Ascending aorta (tissue), 2 donors: ENCODE measurements at regions of chr11 and their contacts with region 1.

Region 1: GRCh38 chr11:65888163-65888814 is at the start of gene FIBP:
- DNase-seq: peak; percentile 90 to 99
- H3K4me3 ChIP-seq: peak within 1 kb of the TSS; percentile 82 to 85
- H3K27ac ChIP-seq: peak within 1 kb of the TSS; percentile 98
- H3K4me1 ChIP-seq: peaks cover 20 to 28% of the 10 kb centered on the region in 2 donors
- H3K27me3 ChIP-seq: no peaks in the 10 kb centered on the region
- CTCF ChIP-seq: peak; percentile 84 to 98 (median 96)
- total RNA-seq, gene FIBP: 57.2 TPM

Region 2: DNA sequence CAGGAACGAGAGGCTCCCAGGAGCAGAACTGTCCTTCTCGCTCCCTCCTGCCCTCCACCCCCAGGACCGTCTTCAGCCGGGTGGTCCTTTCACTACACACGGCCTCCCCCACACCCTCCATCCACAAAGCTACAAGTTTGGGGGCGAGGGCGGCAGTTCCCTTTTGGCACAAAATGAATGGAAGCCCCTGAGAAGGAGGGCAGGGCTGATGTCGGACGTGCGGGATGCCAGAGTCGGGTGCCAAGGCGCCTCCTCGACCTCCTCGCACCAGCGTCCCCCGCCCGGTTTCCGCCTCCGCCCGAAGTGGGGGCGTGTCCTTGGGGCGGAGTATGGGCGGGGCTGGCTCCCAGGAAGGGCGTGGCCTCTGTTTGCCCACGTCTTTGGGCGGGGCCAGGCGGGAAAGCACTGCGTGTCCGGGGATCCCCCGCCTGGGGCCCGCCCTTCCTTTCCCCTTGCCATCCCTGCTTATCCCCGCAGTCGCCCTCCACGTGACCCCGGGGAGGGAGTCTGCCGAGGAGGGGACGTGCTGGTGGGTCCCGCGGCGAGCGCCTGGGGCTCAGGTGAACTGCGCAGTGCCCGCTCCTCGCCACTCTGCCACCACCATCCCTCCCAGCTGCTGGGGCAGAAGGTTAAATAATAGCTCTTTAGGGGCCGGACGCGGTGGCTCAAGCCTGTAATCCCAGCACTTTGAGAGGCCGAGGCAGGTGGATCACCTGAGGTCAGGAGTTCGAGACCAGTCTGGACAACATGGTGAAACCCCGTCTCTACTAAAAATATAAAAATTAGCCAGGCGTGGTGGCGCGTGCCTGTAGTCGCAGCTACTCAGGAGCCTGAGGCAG is 14.8 kb before region 1 on chr11:
- intact Hi-C with region 1: loop called (anchors 1 kb)
- DNase-seq: peak; percentile 84 to 97
- H3K4me3 ChIP-seq: peak overlapping the region; percentile 67 to 92
- H3K27ac ChIP-seq: peak overlapping the region; percentile 92 to 99
- H3K4me1 ChIP-seq: peaks cover 3 to 17% of the 10 kb centered on the region in 2 donors
- H3K27me3 ChIP-seq: no peaks in the 10 kb centered on the region
- CTCF ChIP-seq: no peak

Region 3: GRCh38 chr11:65900125-65900898 is 12.0 kb after region 1 on chr11 and contains the start of gene FOSL1:
- intact Hi-C with region 1: loop called (anchors 1 kb)
- DNase-seq: peak; percentile 80 to 96
- H3K4me3 ChIP-seq: peak within 1 kb of the TSS; percentile 70 to 80
- H3K27ac ChIP-seq: peak within 1 kb of the TSS; percentile 84 to 85
- H3K4me1 ChIP-seq: peaks cover 7 to 20% of the 10 kb centered on the region in 2 donors
- H3K27me3 ChIP-seq: no peaks in the 10 kb centered on the region
- CTCF ChIP-seq: no peak
- total RNA-seq, gene FOSL1: 123 TPM

Region 4: GRCh38 chr11:65961232-65961901 is 73.1 kb after region 1 on chr11 and contains the start of gene SART1:
- intact Hi-C with region 1: loop called (anchors 1 kb)
- DNase-seq: peak; percentile 86 to 99
- H3K4me3 ChIP-seq: peak within 1 kb of the TSS; percentile 89 to 100
- H3K27ac ChIP-seq: peak within 1 kb of the TSS; percentile 86 to 96
- H3K4me1 ChIP-seq: peaks cover 15 to 23% of the 10 kb centered on the region in 2 donors
- H3K27me3 ChIP-seq: no peaks in the 10 kb centered on the region
- CTCF ChIP-seq: peak in 1 of 3 experiments; percentile 13
- total RNA-seq, gene SART1: 28.4 TPM

Region 5: DNA sequence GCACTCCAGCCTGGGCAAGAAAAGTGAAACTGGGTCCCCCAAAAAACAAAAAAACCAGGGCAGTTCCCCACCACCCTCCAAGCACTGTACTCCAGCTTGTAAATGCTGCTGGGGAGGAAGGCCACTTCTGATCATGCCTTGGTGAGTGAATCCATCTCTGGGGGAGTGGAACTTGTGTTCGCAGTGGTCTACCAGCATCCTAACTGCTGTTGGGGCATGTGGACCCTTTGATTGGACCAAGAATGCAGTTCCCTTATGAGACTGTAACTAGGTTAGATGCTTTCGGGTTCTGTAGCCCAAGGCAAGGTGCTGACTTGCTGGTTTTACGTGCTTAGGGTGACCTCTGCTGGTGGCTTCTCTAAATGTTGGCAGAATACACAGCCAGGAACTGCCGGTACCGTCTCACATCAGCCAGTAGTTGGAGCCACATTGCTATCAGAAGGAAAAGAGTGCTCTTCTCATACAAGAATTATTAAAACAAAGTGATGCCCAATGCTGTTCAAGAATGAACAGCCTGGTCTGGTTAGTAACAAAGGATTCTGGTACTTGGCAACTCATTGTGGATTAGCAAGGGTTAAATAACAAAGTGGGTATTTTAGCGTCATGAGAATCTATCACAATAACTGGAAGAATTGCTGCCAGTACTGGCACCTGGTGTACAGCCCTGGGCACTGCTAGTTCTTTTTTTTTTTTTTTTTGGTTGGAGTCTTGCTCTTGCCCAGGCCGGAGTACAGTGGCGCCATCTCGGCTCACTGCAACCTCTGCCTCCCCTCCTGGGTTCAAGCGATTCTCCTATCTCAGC is 100.7 kb after region 1 on chr11:
- intact Hi-C with region 1: loop called (anchors 1 kb)
- DNase-seq: peak; percentile 61 to 97
- H3K4me3 ChIP-seq: no peak overlapping the region
- H3K27ac ChIP-seq: peak overlapping the region; percentile 15 to 60
- H3K4me1 ChIP-seq: no peaks in the 10 kb centered on the region
- H3K27me3 ChIP-seq: no peaks in the 10 kb centered on the region
- CTCF ChIP-seq: peak; percentile 95 to 98 (median 98)

Region 6: DNA sequence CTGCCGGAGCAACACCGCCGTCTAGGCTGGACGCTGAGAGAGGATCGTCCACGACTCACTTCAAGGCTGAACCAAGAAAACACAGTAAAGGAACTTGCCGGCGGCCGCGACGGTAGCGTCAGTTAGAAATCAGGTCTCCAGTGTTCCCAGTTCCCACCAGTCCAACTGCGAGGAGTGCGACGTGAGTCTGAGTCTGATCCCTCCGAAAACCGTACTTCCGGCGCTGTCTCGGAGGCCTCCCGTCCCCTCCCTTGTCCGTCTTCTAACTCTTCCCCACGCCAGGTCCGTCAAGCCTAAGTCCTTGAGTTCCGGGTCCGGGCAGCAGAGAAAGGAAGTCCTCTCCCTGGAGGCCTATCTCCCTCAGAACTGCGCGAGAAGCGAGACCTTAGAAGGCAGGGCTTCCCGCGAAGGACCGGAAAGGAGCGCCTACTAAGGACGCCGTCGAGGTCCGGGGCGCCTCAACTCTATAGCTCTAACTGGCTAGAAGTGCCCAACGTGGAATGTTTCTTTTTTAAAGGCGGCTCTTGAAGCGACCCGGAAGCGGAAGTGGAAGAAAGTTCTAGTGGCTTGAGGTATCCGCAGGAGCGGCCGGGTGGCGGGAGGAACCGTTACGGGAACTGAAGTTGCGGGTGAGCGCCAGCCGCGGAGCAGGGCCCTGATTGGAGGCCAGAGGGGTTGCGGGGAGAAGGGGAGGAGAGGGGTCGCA is 113.8 kb after region 1 on chr11 and contains the starts of genes BANF1 and EIF1AD:
- intact Hi-C with region 1: loop called (anchors 5 kb)
- DNase-seq: peak; percentile 58 to 97
- H3K4me3 ChIP-seq: peak within 1 kb of the TSS; percentile 89 to 98
- H3K27ac ChIP-seq: peak within 1 kb of the TSS; percentile 86 to 93
- H3K4me1 ChIP-seq: peaks cover 3 to 27% of the 10 kb centered on the region in 2 donors
- H3K27me3 ChIP-seq: no peaks in the 10 kb centered on the region
- CTCF ChIP-seq: no peak
- total RNA-seq, gene BANF1: 11.7 TPM
- total RNA-seq, gene EIF1AD: 15.6 TPM

Region 7: DNA sequence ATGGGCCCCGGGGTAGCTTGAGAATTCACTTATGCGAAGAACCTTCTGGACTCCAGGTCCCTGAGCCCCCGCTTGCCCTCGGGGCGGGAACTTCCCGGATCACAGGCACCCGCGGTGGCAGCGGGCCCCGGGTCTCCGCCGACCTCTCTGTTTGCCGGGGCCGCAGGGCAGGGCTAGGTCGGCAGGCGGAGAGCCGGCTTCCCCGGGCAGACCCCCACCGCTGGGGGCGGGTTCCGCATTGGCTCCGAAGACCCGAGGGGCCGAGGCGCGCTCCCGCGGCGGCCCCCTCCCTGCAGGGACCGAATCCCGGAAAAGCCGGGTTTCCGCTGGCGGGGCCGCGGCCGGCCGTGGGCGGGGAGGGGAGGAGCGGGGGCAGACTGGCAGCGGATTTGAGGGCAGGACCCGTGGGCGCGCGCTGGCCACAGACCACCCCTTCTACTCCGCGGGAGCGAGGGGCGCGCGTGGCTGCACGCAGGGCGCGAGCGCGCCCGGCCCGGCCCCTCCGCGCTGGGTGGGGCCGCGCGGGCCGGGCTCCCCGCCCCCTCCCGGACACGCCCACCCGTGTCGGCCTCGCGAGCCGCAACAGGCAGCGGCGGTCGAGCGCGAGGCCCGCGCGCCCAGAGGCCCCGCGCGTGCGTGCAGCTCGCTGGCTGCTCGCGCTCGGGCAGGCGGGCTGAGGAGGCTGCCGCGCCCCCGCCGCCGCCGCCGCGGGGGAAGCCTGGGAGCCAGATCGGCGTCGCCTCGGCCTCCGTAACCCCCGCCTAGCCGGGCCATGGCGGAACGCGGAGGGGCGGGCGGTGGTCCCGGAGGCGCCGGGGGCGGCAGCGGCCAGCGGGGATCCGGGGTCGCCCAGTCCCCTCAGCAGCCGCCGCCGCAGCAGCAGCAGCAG is 181.7 kb after region 1 on chr11 and contains the start of gene PACS1:
- intact Hi-C with region 1: loop called (anchors 5 kb)
- DNase-seq: peak in 1 of 2 donors; percentile 87
- H3K4me3 ChIP-seq: peak within 1 kb of the TSS; percentile 91 to 97
- H3K27ac ChIP-seq: peak within 1 kb of the TSS; percentile 97
- H3K4me1 ChIP-seq: peaks cover 4 to 22% of the 10 kb centered on the region in 2 donors
- H3K27me3 ChIP-seq: no peaks in the 10 kb centered on the region
- CTCF ChIP-seq: peak in 1 of 3 experiments; percentile 51
- total RNA-seq, gene PACS1: 138 TPM